Dorsolateral prefrontal cortex (tissue), 120 donors: ENCODE measurements at regions of chr6 and their contacts with region 1.

Region 1: DNA sequence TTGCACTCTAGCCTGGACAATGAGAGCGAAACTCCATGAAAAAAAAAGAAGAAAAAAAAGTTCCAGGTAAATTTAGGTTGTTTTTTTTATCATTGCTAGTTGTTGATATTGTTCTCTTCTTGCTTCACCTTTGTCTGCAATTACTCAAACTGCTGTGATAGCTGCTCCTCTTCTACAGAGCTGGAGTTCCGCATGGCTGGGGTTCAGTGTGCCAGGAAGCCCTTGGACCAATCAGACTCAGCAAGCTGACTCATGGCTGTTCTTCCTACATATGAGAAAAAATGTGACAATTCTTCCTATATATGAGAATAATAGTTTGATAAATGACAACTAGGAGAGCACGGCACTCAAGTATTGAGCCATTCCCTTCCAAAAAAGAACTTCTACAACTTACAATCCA is 28.4 kb downstream of the DPPA5 start:
- DNase-seq: no peak
- H3K4me3 ChIP-seq: no peak overlapping the region
- H3K27ac ChIP-seq: no peak overlapping the region
- H3K27me3 ChIP-seq: peaks cover 0 to 18% (median 0%) of the 10 kb centered on the region in 45 donors
- CTCF ChIP-seq: no peak

Region 2: GRCh38 chr6:73285674-73286283 is 39.9 kb before region 1 on chr6:
- intact Hi-C with region 1: loop called in 1 of 2 experiments (anchors 2 kb)
- DNase-seq: no peak
- H3K4me3 ChIP-seq: no peak overlapping the region
- H3K27ac ChIP-seq: peak overlapping the region in 1 of 59 donors; percentile 3
- H3K27me3 ChIP-seq: no peaks in the 10 kb centered on the region
- CTCF ChIP-seq: peak in 54 of 56 donors; percentile 16 to 76 (median 56)

Region 3: GRCh38 chr6:73339347-73339746 is 13.7 kb after region 1 on chr6:
- intact Hi-C with region 1: no loop called
- DNase-seq: no peak
- H3K4me3 ChIP-seq: no peak overlapping the region
- H3K27ac ChIP-seq: no peak overlapping the region
- H3K27me3 ChIP-seq: no peaks in the 10 kb centered on the region
- CTCF ChIP-seq: no peak

Region 4: DNA sequence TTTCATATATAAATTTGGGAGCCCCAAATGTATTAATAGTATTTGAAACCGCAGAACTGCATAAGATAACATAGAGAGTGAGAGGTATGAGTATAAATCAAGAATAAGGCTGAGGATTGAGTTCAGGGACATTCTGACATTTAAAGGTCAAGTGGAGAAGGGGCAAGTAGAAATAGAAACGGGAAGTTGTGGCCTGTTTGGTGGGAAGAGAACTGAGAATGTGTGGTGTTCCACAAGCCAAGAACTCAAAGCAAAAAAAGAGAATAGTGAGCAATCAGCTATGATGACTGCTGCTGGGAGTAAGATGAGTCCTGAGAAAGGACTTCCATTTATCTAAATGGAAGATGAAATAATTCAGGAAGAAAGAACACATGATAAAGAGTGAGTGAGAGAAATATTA is 788.8 kb after region 1 on chr6:
- intact Hi-C with region 1: no loop called
- DNase-seq: no peak
- H3K4me3 ChIP-seq: no peak overlapping the region
- H3K27ac ChIP-seq: no peak overlapping the region
- H3K27me3 ChIP-seq: peaks cover 0 to 6% (median 0%) of the 10 kb centered on the region in 45 donors
- CTCF ChIP-seq: no peak